Tibial artery (tissue), 4 donors: ENCODE measurements at regions of chr15 and their contacts with region 1.

Region 1: DNA sequence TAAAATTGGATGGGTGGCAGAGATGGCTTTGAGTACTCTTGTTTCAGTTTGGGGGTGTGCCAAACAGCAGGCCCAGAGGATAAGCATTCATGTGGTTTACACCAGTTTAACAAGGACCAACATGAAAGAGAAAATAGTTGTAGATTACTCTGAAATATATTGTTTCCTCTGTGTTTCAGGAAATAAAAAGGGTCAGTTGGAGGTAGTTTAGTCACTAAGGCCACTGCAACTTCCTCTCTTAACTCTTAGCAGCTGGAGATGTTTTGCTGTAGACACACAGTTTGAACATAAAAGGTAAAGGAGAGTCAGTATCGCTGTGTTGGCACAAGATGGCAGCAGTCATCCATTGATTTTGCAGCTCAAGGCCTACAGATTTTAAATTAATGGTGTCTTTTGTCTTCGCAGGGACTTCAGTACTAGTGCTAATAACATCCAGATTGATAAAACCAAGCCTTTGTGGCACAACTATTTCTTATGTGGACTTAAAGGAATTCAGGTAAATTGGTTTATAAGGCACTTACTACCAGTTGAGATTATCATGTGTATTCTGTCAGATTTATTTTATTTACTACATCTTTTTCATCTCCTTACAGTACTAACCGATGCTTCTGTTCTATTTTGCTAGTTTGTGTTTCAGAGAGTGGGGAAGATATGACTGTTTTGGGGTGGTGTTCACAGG is 65.5 kb downstream of the GALK2 start:
- DNase-seq: no peak
- H3K4me3 ChIP-seq: no peak overlapping the region
- H3K27ac ChIP-seq: peak overlapping the region; percentile 23 to 26
- H3K4me1 ChIP-seq: peaks cover 0 to 30% (median 8%) of the 10 kb centered on the region in 4 donors
- H3K27me3 ChIP-seq: no peaks in the 10 kb centered on the region
- CTCF ChIP-seq: peak; percentile 84 to 88

Region 2: GRCh38 chr15:49015896-49016295 is 219.7 kb before region 1 on chr15:
- intact Hi-C with region 1: no loop called
- DNase-seq: no peak
- H3K4me3 ChIP-seq: no peak overlapping the region
- H3K27ac ChIP-seq: no peak overlapping the region
- H3K4me1 ChIP-seq: no peaks in the 10 kb centered on the region
- H3K27me3 ChIP-seq: no peaks in the 10 kb centered on the region
- CTCF ChIP-seq: no peak

Region 3: GRCh38 chr15:49185473-49185872 is 50.1 kb before region 1 on chr15:
- intact Hi-C with region 1: no loop called
- DNase-seq: no peak
- H3K4me3 ChIP-seq: no peak overlapping the region
- H3K27ac ChIP-seq: no peak overlapping the region
- H3K4me1 ChIP-seq: no peaks in the 10 kb centered on the region
- H3K27me3 ChIP-seq: no peaks in the 10 kb centered on the region
- CTCF ChIP-seq: no peak

Region 4: GRCh38 chr15:49421991-49422390 is 186.4 kb after region 1 on chr15:
- intact Hi-C with region 1: loop called (anchors 2 kb)
- DNase-seq: peak; percentile 41 to 69
- H3K4me3 ChIP-seq: peak overlapping the region; percentile 25 to 32
- H3K27ac ChIP-seq: peak overlapping the region in 1 of 2 donors; percentile 13
- H3K4me1 ChIP-seq: peaks cover 0 to 6% (median 1%) of the 10 kb centered on the region in 4 donors
- H3K27me3 ChIP-seq: no peaks in the 10 kb centered on the region
- CTCF ChIP-seq: peak; percentile 80 to 83

Region 5: DNA sequence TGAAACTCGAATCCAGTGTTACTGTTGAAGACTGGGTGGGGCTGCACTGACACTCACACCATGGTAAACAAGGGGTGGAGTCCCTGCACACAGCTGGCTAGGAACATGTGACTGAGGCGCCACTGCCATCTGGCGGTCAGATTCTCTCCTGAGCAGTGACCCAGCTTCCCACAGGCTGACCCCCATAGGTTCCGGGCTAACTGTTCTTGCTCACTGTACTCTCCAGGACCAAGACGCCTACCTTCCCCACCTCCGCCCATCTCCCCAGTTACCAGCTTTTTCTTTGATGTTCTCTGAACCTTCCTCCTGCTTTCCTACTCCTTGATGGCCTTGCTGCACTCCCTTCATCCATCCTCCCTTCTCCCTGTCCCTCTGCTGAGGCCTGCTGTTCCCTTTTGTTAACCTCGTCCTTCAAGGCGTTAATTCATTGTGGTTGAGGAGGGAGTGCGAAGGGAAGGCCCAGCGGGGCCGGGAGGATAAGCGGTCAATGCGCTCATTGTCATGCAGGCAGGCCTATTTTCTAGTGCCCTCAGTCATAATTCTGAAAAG is 768.3 kb after region 1 on chr15:
- intact Hi-C with region 1: loop called (anchors 10 kb)
- DNase-seq: peak; percentile 85 to 89
- H3K4me3 ChIP-seq: no peak overlapping the region
- H3K27ac ChIP-seq: no peak overlapping the region
- H3K4me1 ChIP-seq: peaks cover 0 to 7% (median 5%) of the 10 kb centered on the region in 4 donors
- H3K27me3 ChIP-seq: no peaks in the 10 kb centered on the region
- CTCF ChIP-seq: peak; percentile 68 to 80

Region 6: DNA sequence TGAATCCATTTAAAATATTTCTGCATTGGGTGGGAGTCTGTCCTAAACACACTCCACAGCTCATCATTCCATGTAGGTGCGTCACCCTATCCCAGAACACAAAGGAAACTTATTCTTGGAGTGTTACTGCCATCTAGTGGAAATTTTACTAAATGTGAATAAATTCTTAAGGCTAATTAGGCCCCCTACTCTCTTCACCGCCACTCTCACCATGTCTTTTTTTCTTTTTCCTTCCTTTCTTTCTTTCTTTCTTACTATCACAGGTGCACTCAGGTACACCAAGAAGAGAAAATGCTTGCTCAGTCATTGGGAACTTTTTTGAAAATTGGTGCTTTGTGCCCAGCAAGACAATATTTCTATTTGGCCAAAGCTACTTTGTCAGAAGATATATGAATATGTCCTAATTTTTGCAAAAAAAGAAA is 909.9 kb after region 1 on chr15:
- intact Hi-C with region 1: loop called (anchors 5 kb)
- DNase-seq: no peak
- H3K4me3 ChIP-seq: no peak overlapping the region
- H3K27ac ChIP-seq: no peak overlapping the region
- H3K4me1 ChIP-seq: no peaks in the 10 kb centered on the region
- H3K27me3 ChIP-seq: no peaks in the 10 kb centered on the region
- CTCF ChIP-seq: peak; percentile 51 to 77